PC-3 (cell line): ENCODE measurements at regions of chr1 and their contacts with region 1.

Region 1: GRCh38 chr1:215146341-215146826 is 63.8 kb downstream of the KCNK2 start:
- DNase-seq: peak; percentile 82
- ATAC-seq: peak; percentile 64
- H3K4me3 ChIP-seq: peak overlapping the region; percentile 5; the same call in 1 of the 2 replicates
- H3K27ac ChIP-seq: no peak overlapping the region
- H3K4me1 ChIP-seq: peaks cover 21% of the 10 kb centered on the region
- H3K27me3 ChIP-seq: no peaks in the 10 kb centered on the region
- CTCF ChIP-seq: peak; percentile 98

Region 2: DNA sequence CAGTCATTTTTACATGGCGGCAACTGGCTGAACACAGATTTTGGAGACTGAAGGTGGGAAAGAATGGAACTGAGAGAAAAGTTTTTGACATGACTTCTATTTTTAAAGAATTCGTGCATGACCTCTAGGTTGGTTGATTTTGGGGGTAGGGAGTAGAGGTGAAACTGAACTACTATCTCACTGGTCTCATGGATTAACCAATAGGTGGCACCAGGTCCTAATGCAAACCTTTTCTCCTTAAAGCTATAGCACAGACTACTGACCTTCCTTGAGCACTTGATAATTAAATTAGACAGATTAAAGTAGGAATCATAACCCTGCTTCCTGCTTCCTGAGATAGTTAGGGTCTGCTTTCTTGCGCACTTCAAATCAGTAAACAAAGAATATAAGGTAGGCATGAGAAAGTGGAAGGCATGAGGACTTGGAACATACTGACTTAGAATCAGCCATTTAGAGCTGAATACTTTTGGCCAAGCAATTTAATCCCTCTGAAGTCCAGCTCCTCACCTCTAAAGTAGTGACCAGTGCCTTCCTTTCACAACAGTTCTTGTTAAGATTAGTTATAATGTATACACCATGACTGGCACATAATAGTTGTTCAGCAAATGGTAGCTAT is 337.4 kb before region 1 on chr1:
- CTCF ChIA-PET with region 1: interaction called, 29 read pairs
- POLR2A ChIA-PET with region 1: no interaction called
- intact Hi-C with region 1: loop called (anchors 1 kb)
- DNase-seq: peak; percentile 85
- ATAC-seq: peak; percentile 99
- H3K4me3 ChIP-seq: no peak overlapping the region
- H3K27ac ChIP-seq: no peak overlapping the region
- H3K4me1 ChIP-seq: no peaks in the 10 kb centered on the region
- H3K27me3 ChIP-seq: no peaks in the 10 kb centered on the region
- CTCF ChIP-seq: peak; percentile 96

Region 3: GRCh38 chr1:214946615-214947014 is 199.8 kb before region 1 on chr1:
- CTCF ChIA-PET with region 1: no interaction called
- POLR2A ChIA-PET with region 1: interaction called, 25 read pairs
- intact Hi-C with region 1: no loop called
- DNase-seq: no peak
- ATAC-seq: no peak
- H3K4me3 ChIP-seq: no peak overlapping the region
- H3K27ac ChIP-seq: no peak overlapping the region
- H3K4me1 ChIP-seq: no peaks in the 10 kb centered on the region
- H3K27me3 ChIP-seq: no peaks in the 10 kb centered on the region
- CTCF ChIP-seq: no peak

Region 4: GRCh38 chr1:215407575-215407974 is 261.2 kb after region 1 on chr1:
- CTCF ChIA-PET with region 1: no interaction called
- POLR2A ChIA-PET with region 1: no interaction called
- intact Hi-C with region 1: no loop called
- DNase-seq: no peak
- ATAC-seq: no peak
- H3K4me3 ChIP-seq: no peak overlapping the region
- H3K27ac ChIP-seq: no peak overlapping the region
- H3K4me1 ChIP-seq: peaks cover 11% of the 10 kb centered on the region
- H3K27me3 ChIP-seq: no peaks in the 10 kb centered on the region
- CTCF ChIP-seq: no peak

Region 5: GRCh38 chr1:215517441-215517891 is 371.1 kb after region 1 on chr1:
- CTCF ChIA-PET with region 1: interaction called, 8 read pairs
- POLR2A ChIA-PET with region 1: no interaction called
- intact Hi-C with region 1: loop called (anchors 1 kb)
- DNase-seq: peak; percentile 93
- ATAC-seq: peak; percentile 99
- H3K4me3 ChIP-seq: peak overlapping the region; percentile 45; the same call in 1 of the 2 replicates
- H3K27ac ChIP-seq: peak overlapping the region; percentile 20
- H3K4me1 ChIP-seq: peaks cover 14% of the 10 kb centered on the region
- H3K27me3 ChIP-seq: no peaks in the 10 kb centered on the region
- CTCF ChIP-seq: peak; percentile 99